ENCODE measurements at regions of chr5 and their contacts with region 1.

Region 1: GRCh38 chr5:95781101-95781583 is 41.4 kb downstream of the GLRX start:
- DNase-seq: peak; percentile 79

Region 2: DNA sequence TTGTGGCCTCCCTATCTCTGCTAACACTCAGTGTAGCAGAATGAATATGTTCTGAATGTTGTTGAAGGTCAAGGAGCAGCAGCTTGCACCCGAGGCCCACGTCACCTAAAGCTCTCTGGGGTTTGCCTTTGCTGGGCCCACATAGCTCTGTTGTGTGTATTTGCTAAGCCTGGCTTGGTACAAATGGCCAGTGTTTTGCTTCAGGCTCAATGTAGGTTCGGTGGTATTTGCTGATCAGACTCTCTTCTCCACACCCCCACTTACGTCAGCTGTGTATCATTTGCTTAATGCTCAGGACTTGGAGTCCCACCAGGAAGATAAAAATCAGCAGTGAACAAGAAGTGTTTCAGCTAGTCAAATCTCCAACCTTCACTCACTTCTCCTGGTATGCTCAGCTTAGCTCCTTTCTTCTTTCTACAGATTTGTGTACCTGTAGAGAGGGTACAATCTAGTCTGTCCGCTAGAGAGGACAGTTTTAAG is 139.4 kb before region 1 on chr5:
- CTCF ChIA-PET with region 1: interaction called, 14 read pairs
- POLR2A ChIA-PET with region 1: interaction called, 4 read pairs
- DNase-seq: no peak

Region 3: GRCh38 chr5:95690333-95690732 is 90.8 kb before region 1 on chr5:
- CTCF ChIA-PET with region 1: no interaction called
- POLR2A ChIA-PET with region 1: no interaction called
- DNase-seq: no peak

Region 4: DNA sequence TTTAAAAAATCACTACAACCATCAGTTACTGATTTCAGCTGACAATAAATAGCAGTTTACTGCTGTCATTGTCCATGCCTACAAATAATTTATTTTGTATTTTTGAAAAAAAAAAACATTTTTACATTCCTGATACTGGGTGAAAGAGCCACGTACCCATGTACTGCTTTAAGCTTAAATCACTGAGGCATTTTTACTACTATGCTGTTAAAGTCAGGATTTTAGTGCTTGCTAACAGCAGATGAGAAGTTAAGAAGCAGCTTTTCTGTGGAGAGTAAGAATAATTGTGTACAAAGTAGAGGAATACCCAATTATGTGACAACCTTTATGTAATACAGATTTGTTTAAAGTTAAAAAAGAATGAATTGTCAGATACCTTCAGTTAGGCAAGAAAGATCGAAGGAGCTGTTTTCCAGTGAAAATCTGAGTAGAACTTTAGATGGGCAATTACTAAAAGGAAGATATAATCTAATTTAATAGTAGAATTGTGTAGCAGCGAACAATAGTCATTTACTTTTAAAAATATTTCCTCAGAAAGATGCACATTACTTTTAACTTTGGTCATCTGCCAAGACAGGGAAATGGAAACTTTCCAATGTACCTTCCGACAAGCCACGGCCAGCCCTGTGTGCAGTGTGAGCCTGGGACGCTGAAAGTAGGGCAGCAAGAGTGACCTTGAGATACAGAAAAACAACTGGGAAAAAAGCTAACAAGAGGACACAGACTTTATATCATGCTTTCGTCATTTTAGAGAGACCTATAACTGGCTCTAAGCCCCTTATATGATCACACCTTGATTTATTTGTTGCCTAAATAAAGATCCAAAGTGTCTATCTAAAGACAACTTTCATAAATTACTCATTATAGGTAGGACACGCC is 10.1 kb before region 1 on chr5:
- CTCF ChIA-PET with region 1: interaction called, 19 read pairs
- POLR2A ChIA-PET with region 1: no interaction called
- DNase-seq: no peak

Region 5: DNA sequence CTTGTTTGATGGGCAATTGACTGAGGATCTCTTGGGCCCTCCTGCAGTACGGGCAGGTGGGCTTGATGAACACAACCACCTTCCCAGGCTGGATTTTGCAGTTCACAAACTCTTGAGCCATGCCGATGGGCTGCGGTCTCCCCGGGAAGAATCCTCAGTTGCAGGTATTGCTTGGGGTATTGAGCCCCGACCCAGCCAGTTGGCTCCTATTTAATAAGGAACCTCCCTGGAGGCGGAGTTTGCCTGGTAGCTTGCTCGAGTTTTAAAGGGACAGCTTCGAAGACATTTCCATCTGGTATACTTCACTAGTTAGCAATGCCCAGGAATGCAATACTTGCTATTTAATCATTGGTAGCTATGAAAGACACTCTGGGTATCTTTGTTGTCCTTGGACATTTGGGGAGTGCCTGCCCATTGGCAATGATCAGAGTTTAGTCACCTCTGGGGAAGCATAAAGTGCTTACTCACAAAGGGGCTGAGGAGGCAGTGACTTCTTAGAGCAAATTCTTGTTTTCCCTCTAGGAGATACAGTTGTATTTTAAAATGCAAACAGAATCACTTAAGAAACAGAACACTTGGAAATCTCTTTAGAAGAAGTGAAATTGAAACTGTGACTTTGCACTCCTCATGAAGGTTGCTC is 41.5 kb after region 1 on chr5 and contains the start of gene GLRX:
- CTCF ChIA-PET with region 1: interaction called, 19 read pairs
- POLR2A ChIA-PET with region 1: interaction called, 6 read pairs
- DNase-seq: peak; percentile 65

Region 6: DNA sequence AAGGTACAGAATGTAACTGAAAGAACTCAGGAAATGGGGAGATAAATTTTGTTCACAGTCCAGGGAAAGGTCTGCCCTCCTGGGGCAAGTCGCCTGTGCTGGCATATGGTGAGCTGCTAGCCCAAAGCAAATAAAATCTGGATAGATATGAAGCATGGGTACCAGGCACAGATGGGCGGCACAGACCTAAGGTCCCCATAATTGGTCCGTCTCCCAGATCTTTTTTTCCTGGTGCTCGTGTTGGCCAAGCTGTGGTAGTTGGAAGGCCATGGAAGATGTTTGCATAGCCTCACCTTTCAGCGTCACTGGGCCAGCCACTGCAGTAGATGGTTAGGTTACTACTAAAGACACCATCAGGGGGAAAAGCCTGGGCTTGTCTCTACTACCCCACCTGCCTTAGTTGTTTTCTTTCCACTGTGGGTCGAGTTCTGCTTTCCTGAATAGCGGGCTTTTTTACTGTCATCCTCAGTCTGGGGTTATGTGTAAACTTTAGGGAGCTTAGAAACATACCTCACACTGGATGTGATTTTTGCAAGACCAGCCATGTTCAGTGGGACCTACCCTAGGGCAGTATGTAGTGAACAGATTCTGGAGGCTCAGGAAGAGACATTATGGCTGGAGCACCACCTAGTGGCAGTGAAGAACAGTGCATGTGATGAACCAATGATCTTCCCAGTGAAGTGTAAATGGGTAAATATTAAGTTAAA is 65.6 kb after region 1 on chr5:
- CTCF ChIA-PET with region 1: interaction called, 22 read pairs
- POLR2A ChIA-PET with region 1: interaction called, 4 read pairs
- DNase-seq: peak; percentile 77

Region 7: DNA sequence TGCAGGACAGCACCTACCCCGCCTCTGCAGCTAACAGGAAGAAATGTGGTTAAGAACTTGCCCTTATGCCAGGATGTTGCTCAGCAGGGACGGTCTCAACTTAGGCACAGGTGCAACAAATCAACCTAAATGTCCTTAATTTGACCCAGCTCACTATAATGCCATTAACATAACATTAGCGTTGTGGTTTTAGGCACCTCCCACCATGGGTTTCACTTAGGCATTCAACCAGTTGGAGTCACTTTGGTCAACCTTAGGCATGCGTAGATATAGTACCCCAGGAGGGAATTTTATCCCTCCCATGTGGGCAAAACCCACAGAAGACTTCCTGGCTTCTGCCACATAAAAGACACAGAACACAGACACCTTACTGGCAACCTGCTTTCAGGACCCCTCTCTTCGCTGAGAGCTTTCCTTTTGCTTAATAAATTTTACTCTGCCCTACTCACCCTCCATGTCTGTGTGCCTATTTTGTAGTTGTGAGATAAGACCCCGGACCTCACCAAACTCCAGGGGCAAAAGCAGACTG is 1035.3 kb after region 1 on chr5:
- CTCF ChIA-PET with region 1: no interaction called
- POLR2A ChIA-PET with region 1: no interaction called
- DNase-seq: no peak

Measured in HEK293T (cell line).